PC-9 (cell line): ENCODE measurements at regions of chr14 and their contacts with region 1.

Region 1: GRCh38 chr14:23588884-23589598 is 10.5 kb upstream of the JPH4 start:
- DNase-seq: peak; percentile 62 to 83
- H3K4me3 ChIP-seq: no peak overlapping the region
- H3K27ac ChIP-seq: no peak overlapping the region
- H3K4me1 ChIP-seq: peaks cover 7% of the 10 kb centered on the region; the same call in 1 of the 2 replicates
- H3K27me3 ChIP-seq: no peaks in the 10 kb centered on the region
- CTCF ChIP-seq: peak; percentile 78

Region 2: DNA sequence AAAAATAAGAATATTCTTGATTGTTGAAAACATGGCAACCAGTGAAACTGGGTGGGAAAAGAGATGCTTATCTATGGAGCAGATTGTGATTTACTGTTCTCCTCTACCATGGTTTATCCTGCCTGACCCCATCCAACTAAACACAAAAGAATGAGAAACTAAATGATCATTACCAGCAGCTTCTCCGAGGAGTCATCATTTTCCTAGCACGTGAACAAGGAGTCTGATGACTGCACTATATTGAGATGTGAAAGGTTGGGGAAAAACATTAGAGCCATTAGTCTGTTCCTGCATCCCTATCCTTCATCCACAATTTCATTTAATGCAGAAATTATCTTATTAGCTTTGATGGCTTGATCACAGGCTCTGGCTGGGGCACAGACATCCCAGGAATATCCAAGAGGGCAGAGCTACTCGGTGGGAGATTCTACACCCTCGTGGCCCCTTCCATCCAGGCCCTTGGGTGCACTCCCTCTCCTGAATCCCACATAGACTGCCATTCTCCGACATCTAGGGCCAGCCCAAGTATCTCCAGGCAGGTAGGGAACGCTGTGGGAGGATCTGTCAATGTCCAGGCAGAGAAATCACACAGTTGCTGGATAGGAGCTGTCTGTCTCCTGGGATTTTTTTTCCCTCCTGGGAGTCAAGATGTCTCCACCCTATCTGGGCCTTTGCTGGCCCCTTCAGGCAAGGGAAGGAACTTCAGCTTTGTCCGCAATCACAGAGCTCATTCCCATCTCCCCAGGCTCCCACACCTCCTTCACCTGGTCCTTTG is 321.2 kb after region 1 on chr14:
- CTCF ChIA-PET with region 1: interaction called, 10 read pairs
- POLR2A ChIA-PET with region 1: no interaction called
- intact Hi-C with region 1: loop called (anchors 1 kb)
- DNase-seq: peak in 1 of 2 experiments; percentile 56
- H3K4me3 ChIP-seq: no peak overlapping the region
- H3K27ac ChIP-seq: no peak overlapping the region
- H3K4me1 ChIP-seq: no peaks in the 10 kb centered on the region
- H3K27me3 ChIP-seq: no peaks in the 10 kb centered on the region
- CTCF ChIP-seq: peak; percentile 78

Region 3: GRCh38 chr14:23929822-23930294 is 340.8 kb after region 1 on chr14:
- CTCF ChIA-PET with region 1: no interaction called
- POLR2A ChIA-PET with region 1: no interaction called
- intact Hi-C with region 1: loop called (anchors 1 kb)
- DNase-seq: peak in 1 of 2 experiments; percentile 47
- H3K4me3 ChIP-seq: no peak overlapping the region
- H3K27ac ChIP-seq: no peak overlapping the region
- H3K4me1 ChIP-seq: no peaks in the 10 kb centered on the region
- H3K27me3 ChIP-seq: no peaks in the 10 kb centered on the region
- CTCF ChIP-seq: peak; percentile 89

Region 4: DNA sequence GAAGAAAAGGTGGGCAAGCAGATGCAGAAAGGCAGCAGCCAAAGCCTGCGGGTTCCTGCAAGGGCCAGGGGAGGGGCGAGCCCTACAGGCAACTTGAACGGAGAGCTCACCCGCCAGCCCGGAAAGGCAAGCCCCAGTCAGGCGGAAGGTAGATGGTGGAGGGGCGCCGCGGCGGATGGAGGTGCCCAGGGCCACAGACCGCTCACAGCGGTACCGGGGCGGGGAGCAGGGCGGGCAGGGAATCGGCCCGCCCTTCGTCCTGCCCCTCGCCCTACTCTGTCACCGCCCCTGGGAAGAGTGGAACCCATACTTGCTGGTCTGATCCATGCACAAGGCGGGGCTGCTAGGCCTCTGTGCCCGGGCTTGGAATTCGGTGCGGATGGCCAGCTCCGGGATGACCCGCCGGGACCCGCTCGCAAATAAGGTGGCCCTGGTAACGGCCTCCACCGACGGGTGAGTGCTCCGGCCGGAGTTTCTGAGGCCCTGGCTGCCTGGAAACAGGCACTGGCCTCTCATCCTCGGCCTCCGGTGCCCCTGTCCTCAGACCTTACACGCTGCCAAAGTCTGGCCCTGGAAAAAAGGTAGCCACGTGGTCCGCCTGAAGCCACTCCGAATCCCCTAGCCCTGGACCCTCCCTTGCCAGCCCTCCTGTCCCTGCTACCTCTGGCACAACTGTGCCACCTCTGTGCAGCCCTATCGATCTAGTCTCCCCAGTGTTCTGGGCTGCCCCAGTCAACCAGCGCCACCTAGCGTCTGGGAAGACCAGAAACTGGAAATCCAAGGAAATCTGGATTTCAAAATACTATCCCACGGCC is 364.6 kb after region 1 on chr14 and contains the start of gene DHRS4:
- CTCF ChIA-PET with region 1: no interaction called
- POLR2A ChIA-PET with region 1: no interaction called
- intact Hi-C with region 1: loop called (anchors 1 kb)
- DNase-seq: peak; percentile 64 to 78
- H3K4me3 ChIP-seq: peak within 1 kb of the TSS; percentile 78
- H3K27ac ChIP-seq: peak within 1 kb of the TSS; percentile 70
- H3K4me1 ChIP-seq: no peaks in the 10 kb centered on the region; the same call in 1 of the 2 replicates
- H3K27me3 ChIP-seq: no peaks in the 10 kb centered on the region
- CTCF ChIP-seq: peak; percentile 90
- total RNA-seq, gene DHRS4: 17.6 and 24.1 TPM in 2 replicates

Region 5: GRCh38 chr14:24036169-24036962 is 447.3 kb after region 1 on chr14:
- CTCF ChIA-PET with region 1: no interaction called
- POLR2A ChIA-PET with region 1: no interaction called
- intact Hi-C with region 1: loop called (anchors 2 kb)
- DNase-seq: peak; percentile 38 to 72
- H3K4me3 ChIP-seq: peak overlapping the region; percentile 62
- H3K27ac ChIP-seq: no peak overlapping the region
- H3K4me1 ChIP-seq: peaks cover 4% of the 10 kb centered on the region; the same call in 1 of the 2 replicates
- H3K27me3 ChIP-seq: no peaks in the 10 kb centered on the region
- CTCF ChIP-seq: peak; percentile 75